ENCODE measurements at regions of chr12 and their contacts with region 1.

Region 1: GRCh38 chr12:57124259-57124877 is 3.9 kb upstream of the LRP1 start:
- DNase-seq: peak in 1 of 2 experiments; percentile 89
- H3K4me3 ChIP-seq: no peak overlapping the region
- H3K27ac ChIP-seq: no peak overlapping the region
- H3K4me1 ChIP-seq: peaks cover 0 to 5% (median 4%) of the 10 kb centered on the region in 4 experiments; a peak in 4 of 7 replicates
- H3K27me3 ChIP-seq: no peaks in the 10 kb centered on the region
- CTCF ChIP-seq: peak; percentile 83 to 99 (median 92)
- EP300 ChIP-seq: no peak
- POLR2A ChIP-seq: no peak
- RAD21 ChIP-seq: peak; percentile 83 to 85

Region 2: DNA sequence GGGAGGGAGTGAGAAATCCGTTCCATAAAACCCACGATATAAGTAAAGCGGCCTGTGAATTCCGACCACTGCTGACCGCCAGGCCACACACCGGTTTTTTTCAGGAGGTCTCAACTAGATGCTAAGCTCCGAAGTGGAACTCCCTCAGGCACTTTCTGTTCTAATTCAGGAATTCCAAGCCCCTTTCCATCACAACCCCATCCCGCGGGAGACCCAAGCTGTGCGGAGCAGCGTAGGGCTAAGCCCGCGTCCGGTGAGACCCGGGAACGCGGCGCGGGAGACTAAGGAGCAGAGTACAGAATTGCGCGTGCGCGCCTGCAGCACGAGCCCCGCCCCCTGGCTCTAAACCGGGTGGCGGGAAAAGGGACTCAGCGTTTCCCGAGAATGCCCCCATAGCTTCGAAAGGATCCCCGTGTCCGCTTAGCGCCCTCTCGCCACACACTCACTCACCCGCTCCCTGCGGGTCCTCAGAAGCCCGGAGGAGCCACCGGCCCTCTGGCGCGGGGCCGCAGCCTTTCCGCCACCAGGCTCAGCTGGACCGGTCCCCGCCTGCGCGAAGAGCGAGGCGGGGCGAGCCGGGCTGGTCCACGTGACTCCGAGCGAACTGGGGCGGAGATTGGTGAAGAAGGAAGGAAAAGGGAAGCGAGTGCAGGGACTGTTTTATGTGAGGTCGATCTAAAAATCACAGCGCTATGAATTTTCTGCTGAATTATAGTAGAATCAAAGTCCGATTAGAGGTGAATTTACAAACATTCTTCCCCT is 675.3 kb before region 1 on chr12 and contains the start of gene TIMELESS:
- CTCF ChIA-PET with region 1: no interaction called
- POLR2A ChIA-PET with region 1: no interaction called
- DNase-seq: peak; percentile 67 to 95
- H3K4me3 ChIP-seq: peak within 1 kb of the TSS; percentile 52 to 90 (median 70)
- H3K27ac ChIP-seq: peak within 1 kb of the TSS; percentile 93
- H3K4me1 ChIP-seq: peaks cover 3 to 6% (median 5%) of the 10 kb centered on the region in 4 experiments; a peak in 5 of 7 replicates
- H3K27me3 ChIP-seq: no peaks in the 10 kb centered on the region
- CTCF ChIP-seq: no peak
- EP300 ChIP-seq: 0 out of 3 replicates have a peak, but pooled peaks of 1 of the 2 experiments have one; percentile 7
- POLR2A ChIP-seq: peak; percentile 94 to 95
- RAD21 ChIP-seq: peak in 1 of 2 experiments; percentile 0; a peak in 1 of 4 replicates
- total RNA-seq, gene TIMELESS: 86.7 and 88.7 TPM in 2 replicates

Region 3: GRCh38 chr12:56792678-56793077 is 331.7 kb before region 1 on chr12:
- CTCF ChIA-PET with region 1: no interaction called
- POLR2A ChIA-PET with region 1: no interaction called
- DNase-seq: no peak
- H3K4me3 ChIP-seq: no peak overlapping the region
- H3K27ac ChIP-seq: no peak overlapping the region
- H3K4me1 ChIP-seq: no peaks in the 10 kb centered on the region
- H3K27me3 ChIP-seq: no peaks in the 10 kb centered on the region
- CTCF ChIP-seq: no peak
- EP300 ChIP-seq: no peak
- POLR2A ChIP-seq: no peak
- RAD21 ChIP-seq: no peak

Region 4: DNA sequence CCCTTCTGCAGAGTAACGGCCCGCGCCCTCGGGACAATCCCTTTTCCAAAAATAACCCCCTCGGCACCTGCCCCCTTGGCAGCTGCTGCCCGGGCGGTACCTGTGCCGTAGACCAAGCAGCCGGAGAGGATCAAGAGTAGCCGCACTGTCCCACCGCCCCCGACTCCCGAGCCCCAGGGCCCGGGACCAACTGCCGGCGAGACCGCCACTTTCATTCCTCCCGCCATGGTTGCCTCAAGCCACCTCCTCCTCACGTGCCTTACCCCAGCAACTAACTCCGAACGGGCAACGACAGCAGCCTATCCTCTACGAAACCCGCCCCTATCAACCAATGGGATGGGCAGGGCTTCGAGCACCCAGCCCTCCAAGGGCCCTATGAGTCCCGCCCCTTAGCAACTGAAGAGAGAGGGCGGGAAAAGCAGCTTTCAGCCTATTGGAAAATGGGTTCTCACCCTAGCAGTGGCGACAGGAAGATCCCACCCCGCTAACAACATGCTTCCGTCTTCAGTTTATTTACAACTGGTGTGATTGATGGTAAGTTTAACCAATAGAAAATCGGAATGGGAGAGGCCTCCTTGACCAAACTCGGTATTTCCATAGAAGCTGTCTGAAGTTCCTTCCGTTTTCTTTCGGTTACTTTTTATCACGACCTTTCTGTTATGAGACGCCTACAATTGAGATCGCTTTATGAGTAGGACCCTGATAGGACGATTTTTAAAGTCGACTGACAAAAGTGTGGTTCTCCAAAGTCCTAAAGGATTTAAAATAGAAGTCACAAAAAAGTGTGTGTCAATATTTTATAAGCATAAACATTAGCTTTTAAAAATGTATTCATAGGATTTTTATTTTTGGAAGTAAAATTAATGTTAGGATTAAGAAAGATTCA is 45.6 kb before region 1 on chr12 and contains the start of gene NEMP1:
- CTCF ChIA-PET with region 1: interaction called, 9 read pairs
- POLR2A ChIA-PET with region 1: interaction called, 16 read pairs
- DNase-seq: peak; percentile 85 to 98
- H3K4me3 ChIP-seq: peak within 1 kb of the TSS; percentile 79 to 95 (median 87)
- H3K27ac ChIP-seq: peak within 1 kb of the TSS; percentile 43; the same call in 1 of the 2 replicates
- H3K4me1 ChIP-seq: peaks cover 0 to 3% (median 0%) of the 10 kb centered on the region in 4 experiments; a peak in 1 of 7 replicates
- H3K27me3 ChIP-seq: no peaks in the 10 kb centered on the region
- CTCF ChIP-seq: no peak
- EP300 ChIP-seq: no peak
- POLR2A ChIP-seq: peak; percentile 69 to 83
- RAD21 ChIP-seq: no peak
- total RNA-seq, gene NEMP1: 41.6 and 43.2 TPM in 2 replicates

Region 5: GRCh38 chr12:57135527-57136326 is 11.4 kb after region 1 on chr12:
- CTCF ChIA-PET with region 1: interaction called, 76 read pairs
- POLR2A ChIA-PET with region 1: interaction called, 22 read pairs
- DNase-seq: no peak
- H3K4me3 ChIP-seq: peak overlapping the region in 1 of 4 experiments; percentile 47; a peak in 4 of 8 replicates
- H3K27ac ChIP-seq: peak overlapping the region; percentile 78
- H3K4me1 ChIP-seq: peaks cover 22 to 53% (median 30%) of the 10 kb centered on the region in 4 experiments
- H3K27me3 ChIP-seq: no peaks in the 10 kb centered on the region
- CTCF ChIP-seq: no peak
- EP300 ChIP-seq: no peak
- POLR2A ChIP-seq: no peak; a peak in 1 of 3 replicates
- RAD21 ChIP-seq: no peak

Region 6: DNA sequence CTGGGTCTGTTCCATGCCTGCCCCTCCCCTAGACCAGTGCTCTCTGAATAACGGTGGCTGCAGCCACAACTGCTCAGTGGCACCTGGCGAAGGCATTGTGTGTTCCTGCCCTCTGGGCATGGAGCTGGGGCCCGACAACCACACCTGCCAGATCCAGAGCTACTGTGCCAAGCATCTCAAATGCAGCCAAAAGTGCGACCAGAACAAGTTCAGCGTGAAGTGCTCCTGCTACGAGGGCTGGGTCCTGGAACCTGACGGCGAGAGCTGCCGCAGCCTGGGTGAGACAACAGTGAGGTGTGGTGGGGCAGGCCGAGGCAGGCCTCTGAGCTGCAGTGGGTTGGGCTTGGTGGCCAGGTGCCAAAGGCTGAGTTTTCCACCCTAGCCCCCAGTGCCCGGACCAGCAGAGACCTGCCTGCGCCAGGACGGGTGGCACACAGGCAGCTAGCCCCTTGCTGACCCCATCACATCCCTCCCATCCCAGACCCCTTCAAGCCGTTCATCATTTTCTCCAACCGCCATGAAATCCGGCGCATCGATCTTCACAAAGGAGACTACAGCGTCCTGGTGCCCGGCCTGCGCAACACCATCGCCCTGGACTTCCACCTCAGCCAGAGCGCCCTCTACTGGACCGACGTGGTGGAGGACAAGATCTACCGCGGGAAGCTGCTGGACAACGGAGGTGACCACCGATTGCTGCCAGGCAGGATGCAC is 51.2 kb after region 1 on chr12:
- CTCF ChIA-PET with region 1: interaction called, 305 read pairs
- POLR2A ChIA-PET with region 1: interaction called, 55 read pairs
- DNase-seq: peak; percentile 50 to 98
- H3K4me3 ChIP-seq: no peak overlapping the region
- H3K27ac ChIP-seq: no peak overlapping the region
- H3K4me1 ChIP-seq: no peaks in the 10 kb centered on the region
- H3K27me3 ChIP-seq: no peaks in the 10 kb centered on the region
- CTCF ChIP-seq: peak in 2 of 3 experiments; percentile 87 to 93; a peak in 3 of 4 replicates
- EP300 ChIP-seq: no peak
- POLR2A ChIP-seq: no peak
- RAD21 ChIP-seq: peak; percentile 45 to 61

Region 7: GRCh38 chr12:57229634-57230380 is 105.4 kb after region 1 on chr12 and contains the start of gene SHMT2:
- CTCF ChIA-PET with region 1: interaction called, 3 read pairs
- POLR2A ChIA-PET with region 1: interaction called, 20 read pairs
- DNase-seq: peak; percentile 91 to 94
- H3K4me3 ChIP-seq: peak within 1 kb of the TSS; percentile 69 to 93 (median 81)
- H3K27ac ChIP-seq: peak within 1 kb of the TSS; percentile 85
- H3K4me1 ChIP-seq: peaks cover 4 to 43% (median 21%) of the 10 kb centered on the region in 4 experiments
- H3K27me3 ChIP-seq: peaks cover 11 to 32% (median 26%) of the 10 kb centered on the region in 4 experiments
- CTCF ChIP-seq: no peak
- EP300 ChIP-seq: 0 out of 3 replicates have a peak, but pooled peaks of 1 of the 2 experiments have one; percentile 37
- POLR2A ChIP-seq: peak in 1 of 2 experiments; percentile 68; a peak in 2 of 3 replicates
- RAD21 ChIP-seq: no peak
- total RNA-seq, gene SHMT2: 274 and 283 TPM in 2 replicates